Psoas muscle (tissue), 8 donors: ENCODE measurements at regions of chr9 and their contacts with region 1.

Region 1: GRCh38 chr9:34500623-34501267 is 22.0 kb downstream of the ENHO start:
- DNase-seq: peak; percentile 33 to 72
- ATAC-seq: peak; percentile 78 to 91 (median 83)
- H3K4me3 ChIP-seq: no peak overlapping the region
- H3K27ac ChIP-seq: no peak overlapping the region
- H3K4me1 ChIP-seq: no peaks in the 10 kb centered on the region
- H3K27me3 ChIP-seq: no peaks in the 10 kb centered on the region
- CTCF ChIP-seq: peak; percentile 99

Region 2: DNA sequence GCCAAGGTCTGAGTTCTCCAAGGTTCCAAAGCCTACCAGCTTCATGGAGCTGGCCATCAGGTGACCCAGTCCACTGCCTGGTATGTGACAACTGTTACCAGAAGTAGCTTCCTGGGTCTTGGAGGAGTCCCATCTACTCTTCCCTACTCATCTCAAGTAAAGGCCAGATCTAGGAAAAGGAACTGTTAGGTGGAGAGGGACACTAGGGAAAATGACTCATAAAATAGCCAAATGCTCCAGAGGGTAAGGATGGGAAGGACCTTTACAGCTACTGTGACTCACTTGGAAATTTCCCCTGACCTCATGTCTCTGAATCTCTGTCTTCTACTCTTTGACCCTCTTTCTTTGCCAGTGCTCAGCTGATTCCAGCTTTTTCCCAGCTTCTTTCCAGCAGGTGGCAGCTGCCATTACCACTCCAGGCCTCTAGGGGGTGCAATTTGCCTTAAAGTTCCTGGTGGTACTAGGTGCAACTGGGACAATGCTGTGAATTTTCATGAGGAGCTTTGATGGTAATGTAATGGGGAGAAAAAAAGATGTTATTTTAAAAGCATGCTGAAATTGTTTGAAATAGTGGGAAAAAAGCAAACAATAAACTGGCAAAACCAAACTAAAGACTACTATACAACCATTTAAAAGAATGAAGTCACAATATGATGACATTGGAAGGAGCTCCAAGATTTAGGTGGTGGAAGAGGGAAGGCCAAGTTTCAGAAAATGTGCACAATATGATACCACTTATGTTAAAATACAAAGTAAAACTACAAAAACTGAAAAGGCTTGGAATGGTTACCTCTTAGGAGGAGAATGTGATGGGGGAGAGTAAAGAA is 97.0 kb before region 1 on chr9:
- intact Hi-C with region 1: loop called (anchors 1 to 2 kb)
- DNase-seq: peak; percentile 56 to 78
- ATAC-seq: peak; percentile 71 to 81 (median 75)
- H3K4me3 ChIP-seq: no peak overlapping the region
- H3K27ac ChIP-seq: no peak overlapping the region
- H3K4me1 ChIP-seq: no peaks in the 10 kb centered on the region
- H3K27me3 ChIP-seq: no peaks in the 10 kb centered on the region
- CTCF ChIP-seq: peak; percentile 98

Region 3: GRCh38 chr9:34419716-34420504 is 80.8 kb before region 1 on chr9:
- intact Hi-C with region 1: loop called in 1 of 2 experiments (anchors 5 kb)
- DNase-seq: no peak
- ATAC-seq: no peak
- H3K4me3 ChIP-seq: no peak overlapping the region
- H3K27ac ChIP-seq: no peak overlapping the region
- H3K4me1 ChIP-seq: peaks cover 4% of the 10 kb centered on the region
- H3K27me3 ChIP-seq: no peaks in the 10 kb centered on the region
- CTCF ChIP-seq: no peak

Region 4: DNA sequence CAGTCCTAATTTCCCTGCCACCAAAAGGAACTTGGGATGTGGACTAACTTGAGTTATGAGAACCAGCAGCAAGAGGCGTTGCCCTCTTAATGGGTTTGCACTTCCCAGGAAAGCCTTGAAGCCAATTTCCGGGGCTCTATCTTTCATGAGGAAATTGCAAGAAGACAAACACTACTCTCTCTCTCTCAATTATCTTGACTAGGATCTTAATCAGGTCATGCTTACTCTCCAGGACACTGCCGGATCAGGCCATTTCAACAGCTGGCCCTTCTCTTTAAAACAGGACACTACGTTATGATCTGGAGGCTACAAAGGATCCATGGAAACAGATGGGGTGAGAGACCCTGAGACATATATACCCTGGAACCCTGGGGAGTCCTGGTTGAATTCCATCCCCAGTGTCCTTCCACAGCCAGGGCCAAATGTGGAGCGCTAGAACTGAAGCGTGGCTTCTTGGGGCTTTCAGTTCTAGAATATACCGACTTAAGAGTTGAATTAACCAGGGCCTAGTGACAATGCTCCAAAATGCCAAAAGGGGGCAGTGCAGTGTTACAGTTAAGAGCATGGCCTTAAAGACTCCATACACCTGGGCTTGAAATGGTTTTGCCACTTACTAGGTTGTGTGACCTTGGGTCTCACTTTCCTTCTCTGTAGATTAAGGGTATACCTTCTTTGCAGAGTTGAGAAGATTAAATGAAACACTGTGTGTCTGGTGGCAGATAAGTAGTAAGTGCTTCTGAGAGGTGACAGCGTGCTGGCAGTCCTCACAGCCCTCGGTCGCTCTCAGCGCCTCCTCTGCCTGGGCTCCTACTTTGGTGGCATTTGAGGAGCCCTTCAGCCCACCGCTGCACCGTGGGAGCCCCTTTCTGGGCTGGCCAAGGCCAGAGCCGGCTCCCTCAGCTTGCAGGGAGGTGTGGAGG is 63.5 kb before region 1 on chr9:
- intact Hi-C with region 1: loop called (anchors 1 to 2 kb)
- DNase-seq: no peak
- ATAC-seq: peak; percentile 77 to 88 (median 84)
- H3K4me3 ChIP-seq: no peak overlapping the region
- H3K27ac ChIP-seq: no peak overlapping the region
- H3K4me1 ChIP-seq: peaks cover 27% of the 10 kb centered on the region
- H3K27me3 ChIP-seq: no peaks in the 10 kb centered on the region
- CTCF ChIP-seq: peak; percentile 72

Region 5: GRCh38 chr9:34463098-34463900 is 37.4 kb before region 1 on chr9:
- intact Hi-C with region 1: no loop called
- DNase-seq: no peak
- ATAC-seq: no peak
- H3K4me3 ChIP-seq: no peak overlapping the region
- H3K27ac ChIP-seq: no peak overlapping the region
- H3K4me1 ChIP-seq: peaks cover 45% of the 10 kb centered on the region
- H3K27me3 ChIP-seq: no peaks in the 10 kb centered on the region
- CTCF ChIP-seq: no peak